ENCODE measurements at regions of chr11 and their contacts with region 1.

Region 1: DNA sequence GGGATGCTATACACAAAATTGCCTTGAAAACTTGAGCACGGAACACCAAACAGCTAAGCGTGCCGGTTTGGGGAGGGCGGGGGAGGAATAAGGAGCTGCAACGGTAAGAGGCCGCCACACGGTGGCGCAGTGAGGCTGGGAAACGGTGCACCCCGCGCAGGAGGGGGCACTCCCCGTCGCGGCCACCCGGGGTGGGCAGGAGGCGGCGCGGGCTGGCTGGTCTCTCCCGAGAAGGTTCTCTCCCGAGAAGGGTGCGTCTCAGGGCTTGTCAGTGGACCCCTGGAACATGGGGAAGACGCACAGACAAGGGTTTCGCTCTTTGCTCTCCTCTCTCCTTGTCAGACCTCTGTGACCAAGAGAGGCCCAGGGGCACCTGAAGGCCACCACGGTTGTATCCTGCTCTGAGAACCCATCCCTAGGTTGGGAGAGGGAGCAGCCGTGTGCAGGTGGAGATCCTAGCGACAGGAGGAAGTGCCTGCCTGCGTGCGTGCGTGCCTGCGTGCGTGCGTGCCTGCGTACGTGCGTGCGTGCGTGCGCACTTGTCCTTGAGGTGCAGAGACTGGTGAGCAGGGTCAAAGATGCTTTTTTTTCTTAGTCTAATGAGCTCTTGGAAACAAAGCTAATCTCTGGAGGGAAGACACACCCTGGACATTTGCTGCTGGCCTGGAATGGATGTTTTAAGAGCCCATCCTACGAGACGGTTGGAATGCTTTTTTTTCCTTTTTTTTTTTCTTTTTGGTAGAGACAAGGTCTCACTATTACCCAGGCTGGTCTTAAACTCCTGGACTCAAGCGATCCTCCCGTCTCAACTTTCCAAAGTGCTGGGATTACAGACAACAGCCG is 18.1 kb upstream of the JAM3 start:
- DNase-seq: peak; percentile 74
- H3K4me3 Mint-ChIP-seq: peak overlapping the region; percentile 59
- H3K27ac Mint-ChIP-seq: peak overlapping the region; percentile 76
- H3K4me1 Mint-ChIP-seq: no peaks in the 10 kb centered on the region
- H3K27me3 Mint-ChIP-seq: peaks cover 9% of the 10 kb centered on the region

Region 2: DNA sequence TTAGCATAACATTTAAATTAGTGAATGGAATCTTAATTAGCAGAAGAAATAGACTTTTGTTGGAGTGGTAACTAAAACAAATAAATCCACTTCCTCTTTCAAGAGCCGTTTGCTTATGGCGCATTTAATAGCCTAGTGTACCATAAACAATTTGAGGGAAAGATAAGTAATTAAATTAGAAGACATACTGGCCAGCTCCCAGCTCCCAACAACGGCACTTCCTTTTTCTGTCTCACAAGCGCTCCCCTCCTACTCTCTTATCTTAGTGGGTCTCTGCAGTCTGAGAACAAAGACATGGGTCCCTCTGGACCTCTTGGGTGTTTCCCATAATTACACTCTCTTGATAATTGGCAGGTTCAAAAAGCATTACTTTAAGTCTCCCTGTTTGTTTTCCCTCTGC is 664.5 kb before region 1 on chr11:
- CTCF ChIA-PET with region 1: no interaction called
- intact Hi-C with region 1: no loop called
- DNase-seq: no peak
- H3K4me3 Mint-ChIP-seq: no peak overlapping the region
- H3K27ac Mint-ChIP-seq: no peak overlapping the region
- H3K4me1 Mint-ChIP-seq: no peaks in the 10 kb centered on the region
- H3K27me3 Mint-ChIP-seq: peaks cover 3% of the 10 kb centered on the region

Region 3: GRCh38 chr11:133947321-133947756 is 103.4 kb before region 1 on chr11:
- CTCF ChIA-PET with region 1: interaction called, 21 read pairs
- intact Hi-C with region 1: loop called (anchors 5 kb)
- DNase-seq: peak; percentile 82
- H3K4me3 Mint-ChIP-seq: peak overlapping the region; percentile 14
- H3K27ac Mint-ChIP-seq: no peak overlapping the region
- H3K4me1 Mint-ChIP-seq: peaks cover 65% of the 10 kb centered on the region
- H3K27me3 Mint-ChIP-seq: no peaks in the 10 kb centered on the region

Region 4: GRCh38 chr11:134033696-134034491 is 16.9 kb before region 1 on chr11:
- CTCF ChIA-PET with region 1: interaction called, 44 read pairs
- intact Hi-C with region 1: no loop called
- DNase-seq: peak; percentile 84
- H3K4me3 Mint-ChIP-seq: peak overlapping the region; percentile 44
- H3K27ac Mint-ChIP-seq: peak overlapping the region; percentile 43
- H3K4me1 Mint-ChIP-seq: peaks cover 52% of the 10 kb centered on the region
- H3K27me3 Mint-ChIP-seq: no peaks in the 10 kb centered on the region

Region 5: DNA sequence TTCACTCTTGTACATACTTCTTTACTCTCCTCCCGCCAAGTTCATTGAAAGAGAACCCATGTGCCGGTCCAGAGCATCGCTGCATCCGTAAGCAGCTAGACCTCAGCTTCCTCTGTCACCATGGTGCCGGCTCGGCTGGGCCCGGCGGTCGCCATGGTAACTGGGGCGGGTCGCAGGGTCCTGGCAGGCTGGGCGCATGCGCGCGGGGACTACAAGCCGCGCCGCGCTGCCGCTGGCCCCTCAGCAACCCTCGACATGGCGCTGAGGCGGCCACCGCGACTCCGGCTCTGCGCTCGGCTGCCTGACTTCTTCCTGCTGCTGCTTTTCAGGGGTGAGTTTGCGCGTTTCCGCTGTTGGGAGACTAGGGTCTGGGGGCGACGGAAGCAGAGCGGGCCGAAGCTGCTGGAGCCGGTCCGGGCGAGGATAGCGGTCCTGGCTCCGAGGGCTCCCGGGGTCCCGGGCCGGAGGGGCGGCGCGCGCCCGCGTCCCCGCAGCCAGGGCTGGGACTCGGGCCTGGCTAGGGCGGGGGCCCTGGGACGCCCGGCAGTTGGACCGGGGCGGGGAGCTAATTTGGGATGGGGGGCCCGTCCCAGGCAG is 18.2 kb after region 1 on chr11 and contains the start of gene JAM3:
- CTCF ChIA-PET with region 1: interaction called, 27 read pairs
- intact Hi-C with region 1: loop called (anchors 1 kb)
- DNase-seq: peak; percentile 94
- H3K4me3 Mint-ChIP-seq: peak within 1 kb of the TSS; percentile 94
- H3K27ac Mint-ChIP-seq: no peak within 1 kb of the TSS
- H3K4me1 Mint-ChIP-seq: peaks cover 11% of the 10 kb centered on the region
- H3K27me3 Mint-ChIP-seq: no peaks in the 10 kb centered on the region
- total RNA-seq, gene JAM3: 4.0 to 6.4 TPM

Region 6: GRCh38 chr11:134132793-134133192 is 82.0 kb after region 1 on chr11:
- CTCF ChIA-PET with region 1: interaction called, 33 read pairs
- intact Hi-C with region 1: no loop called
- DNase-seq: no peak
- H3K4me3 Mint-ChIP-seq: no peak overlapping the region
- H3K27ac Mint-ChIP-seq: no peak overlapping the region
- H3K4me1 Mint-ChIP-seq: no peaks in the 10 kb centered on the region
- H3K27me3 Mint-ChIP-seq: no peaks in the 10 kb centered on the region

Measured in activated naive CD4-positive, alpha-beta T cell treated with anti-CD3 and anti-CD28 coated beads for 36 hours (primary cell).